ENCODE measurements at regions of chr3 and their contacts with region 1.

Region 1: GRCh38 chr3:101229681-101230080 is 90.7 kb downstream of the IMPG2 start:
- DNase-seq: no peak
- H3K4me3 ChIP-seq: no peak overlapping the region
- H3K27ac ChIP-seq: no peak overlapping the region
- H3K4me1 ChIP-seq: peaks cover 0 to 22% (median 20%) of the 10 kb centered on the region in 4 donors
- H3K27me3 ChIP-seq: no peaks in the 10 kb centered on the region
- CTCF ChIP-seq: no peak
- EP300 ChIP-seq: no peak
- POLR2A ChIP-seq: no peak

Region 2: GRCh38 chr3:101017017-101017416 is 212.7 kb before region 1 on chr3:
- intact Hi-C with region 1: no loop called
- DNase-seq: no peak
- H3K4me3 ChIP-seq: no peak overlapping the region
- H3K27ac ChIP-seq: peak overlapping the region in 2 of 4 donors; percentile 21 to 37
- H3K4me1 ChIP-seq: no peaks in the 10 kb centered on the region
- H3K27me3 ChIP-seq: no peaks in the 10 kb centered on the region
- CTCF ChIP-seq: no peak
- EP300 ChIP-seq: no peak
- POLR2A ChIP-seq: no peak

Region 3: GRCh38 chr3:101303089-101303731 is 73.5 kb after region 1 on chr3:
- intact Hi-C with region 1: loop called (anchors 5 kb)
- DNase-seq: no peak
- H3K4me3 ChIP-seq: no peak overlapping the region
- H3K27ac ChIP-seq: peak overlapping the region in 1 of 4 donors; percentile 6
- H3K4me1 ChIP-seq: peaks cover 0 to 6% (median 2%) of the 10 kb centered on the region in 4 donors
- H3K27me3 ChIP-seq: no peaks in the 10 kb centered on the region
- CTCF ChIP-seq: no peak
- EP300 ChIP-seq: no peak
- POLR2A ChIP-seq: no peak